CD8-positive, alpha-beta T cell (primary cell): ENCODE measurements at regions of chr12 and their contacts with region 1.

Region 1: DNA sequence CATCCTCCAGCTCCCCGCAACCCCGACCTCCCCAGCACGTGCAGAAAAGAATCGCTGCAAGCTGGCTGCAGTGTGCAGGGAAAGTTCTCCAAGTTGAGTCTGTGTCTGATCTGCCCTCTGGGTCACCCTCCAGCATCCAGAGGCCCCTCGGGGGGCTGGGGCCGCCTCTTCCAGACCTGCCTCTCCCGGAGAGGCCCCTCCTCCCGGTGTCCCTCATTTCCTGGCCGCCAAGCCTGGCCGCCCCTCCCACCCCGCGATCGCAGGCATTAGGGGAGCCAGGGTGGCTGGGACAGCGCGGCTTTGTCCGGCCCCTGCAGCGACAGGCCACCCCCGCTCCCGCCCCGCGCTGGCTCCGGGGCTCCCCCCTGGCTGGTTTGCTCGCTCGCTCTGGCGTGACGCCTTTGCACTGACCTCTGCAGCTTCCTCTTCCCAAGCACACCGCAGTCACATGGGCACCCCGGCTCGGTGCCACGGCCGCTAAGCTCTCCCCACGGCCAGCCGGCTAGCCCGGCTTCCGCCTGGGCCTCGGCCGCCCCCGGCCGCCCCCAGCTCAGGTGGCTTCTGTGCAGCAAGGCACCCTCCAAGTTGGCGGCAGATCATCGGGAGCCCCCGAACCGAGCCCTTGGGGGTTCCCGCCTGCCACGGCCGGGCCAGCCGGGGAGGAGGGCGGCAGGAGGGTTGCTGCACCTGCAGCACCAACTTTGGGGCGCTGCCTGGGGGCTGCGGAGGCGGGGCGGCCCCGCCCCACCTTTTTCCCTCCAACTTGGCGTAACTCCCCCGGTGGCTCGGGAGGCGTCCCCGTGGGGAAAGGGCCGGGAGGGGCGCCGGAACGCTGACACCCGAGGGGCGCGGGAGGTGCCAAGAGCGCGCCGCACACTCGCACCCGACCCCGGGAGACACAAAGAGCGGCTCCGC is 43.7 kb downstream of the KDM2B start:
- DNase-seq: peak in 8 of 9 experiments; percentile 22 to 83 (median 58)
- ATAC-seq: peak; percentile 5
- H3K4me3 ChIP-seq: peak overlapping the region; percentile 52 to 68
- H3K4me3 Mint-ChIP-seq: peak overlapping the region; percentile 80
- H3K27ac ChIP-seq: peak overlapping the region; percentile 80 to 83
- H3K27ac Mint-ChIP-seq: peak overlapping the region; percentile 96
- H3K4me1 ChIP-seq: peaks cover 34% of the 10 kb centered on the region
- H3K4me1 Mint-ChIP-seq: peaks cover 43% of the 10 kb centered on the region
- H3K27me3 ChIP-seq: no peaks in the 10 kb centered on the region
- H3K27me3 Mint-ChIP-seq: no peaks in the 10 kb centered on the region
- CTCF ChIP-seq: no peak

Region 2: GRCh38 chr12:121579981-121580868 is 43.1 kb after region 1 on chr12:
- CTCF ChIA-PET with region 1: no interaction called
- POLR2A ChIA-PET with region 1: interaction called, 3 read pairs
- intact Hi-C with region 1: loop called in 1 of 2 experiments (anchors 2 kb)
- DNase-seq: peak; percentile 63 to 91 (median 82)
- ATAC-seq: peak; percentile 62
- H3K4me3 ChIP-seq: peak overlapping the region; percentile 58 to 73
- H3K4me3 Mint-ChIP-seq: peak overlapping the region; percentile 95
- H3K27ac ChIP-seq: peak overlapping the region; percentile 84 to 85
- H3K27ac Mint-ChIP-seq: peak overlapping the region; percentile 98
- H3K4me1 ChIP-seq: peaks cover 42% of the 10 kb centered on the region
- H3K4me1 Mint-ChIP-seq: peaks cover 51% of the 10 kb centered on the region
- H3K27me3 ChIP-seq: no peaks in the 10 kb centered on the region
- H3K27me3 Mint-ChIP-seq: no peaks in the 10 kb centered on the region
- CTCF ChIP-seq: no peak

Region 3: GRCh38 chr12:121590476-121591143 is 53.5 kb after region 1 on chr12:
- CTCF ChIA-PET with region 1: no interaction called
- POLR2A ChIA-PET with region 1: no interaction called
- intact Hi-C with region 1: loop called (anchors 1 to 2 kb)
- DNase-seq: peak in 8 of 9 experiments; percentile 37 to 92 (median 75)
- ATAC-seq: peak; percentile 75
- H3K4me3 ChIP-seq: peak overlapping the region; percentile 44 to 57
- H3K4me3 Mint-ChIP-seq: peak overlapping the region; percentile 89
- H3K27ac ChIP-seq: peak overlapping the region; percentile 95 to 96
- H3K27ac Mint-ChIP-seq: peak overlapping the region; percentile 100
- H3K4me1 ChIP-seq: peaks cover 30% of the 10 kb centered on the region
- H3K4me1 Mint-ChIP-seq: peaks cover 33% of the 10 kb centered on the region
- H3K27me3 ChIP-seq: no peaks in the 10 kb centered on the region
- H3K27me3 Mint-ChIP-seq: no peaks in the 10 kb centered on the region
- CTCF ChIP-seq: no peak

Region 4: GRCh38 chr12:122888232-122888867 is 1351.2 kb after region 1 on chr12:
- CTCF ChIA-PET with region 1: no interaction called
- POLR2A ChIA-PET with region 1: no interaction called
- intact Hi-C with region 1: loop called in 1 of 2 experiments (anchors 5 kb)
- DNase-seq: peak in 6 of 9 experiments; percentile 42 to 89 (median 71)
- ATAC-seq: peak; percentile 88
- H3K4me3 ChIP-seq: peak overlapping the region in 1 of 2 experiments; percentile 26
- H3K4me3 Mint-ChIP-seq: peak overlapping the region; percentile 77
- H3K27ac ChIP-seq: peak overlapping the region; percentile 17 to 63
- H3K27ac Mint-ChIP-seq: peak overlapping the region; percentile 93
- H3K4me1 ChIP-seq: peaks cover 74% of the 10 kb centered on the region
- H3K4me1 Mint-ChIP-seq: peaks cover 87% of the 10 kb centered on the region
- H3K27me3 ChIP-seq: no peaks in the 10 kb centered on the region
- H3K27me3 Mint-ChIP-seq: no peaks in the 10 kb centered on the region
- CTCF ChIP-seq: no peak